ENCODE measurements at regions of chr22 and their contacts with region 1.

Region 1: DNA sequence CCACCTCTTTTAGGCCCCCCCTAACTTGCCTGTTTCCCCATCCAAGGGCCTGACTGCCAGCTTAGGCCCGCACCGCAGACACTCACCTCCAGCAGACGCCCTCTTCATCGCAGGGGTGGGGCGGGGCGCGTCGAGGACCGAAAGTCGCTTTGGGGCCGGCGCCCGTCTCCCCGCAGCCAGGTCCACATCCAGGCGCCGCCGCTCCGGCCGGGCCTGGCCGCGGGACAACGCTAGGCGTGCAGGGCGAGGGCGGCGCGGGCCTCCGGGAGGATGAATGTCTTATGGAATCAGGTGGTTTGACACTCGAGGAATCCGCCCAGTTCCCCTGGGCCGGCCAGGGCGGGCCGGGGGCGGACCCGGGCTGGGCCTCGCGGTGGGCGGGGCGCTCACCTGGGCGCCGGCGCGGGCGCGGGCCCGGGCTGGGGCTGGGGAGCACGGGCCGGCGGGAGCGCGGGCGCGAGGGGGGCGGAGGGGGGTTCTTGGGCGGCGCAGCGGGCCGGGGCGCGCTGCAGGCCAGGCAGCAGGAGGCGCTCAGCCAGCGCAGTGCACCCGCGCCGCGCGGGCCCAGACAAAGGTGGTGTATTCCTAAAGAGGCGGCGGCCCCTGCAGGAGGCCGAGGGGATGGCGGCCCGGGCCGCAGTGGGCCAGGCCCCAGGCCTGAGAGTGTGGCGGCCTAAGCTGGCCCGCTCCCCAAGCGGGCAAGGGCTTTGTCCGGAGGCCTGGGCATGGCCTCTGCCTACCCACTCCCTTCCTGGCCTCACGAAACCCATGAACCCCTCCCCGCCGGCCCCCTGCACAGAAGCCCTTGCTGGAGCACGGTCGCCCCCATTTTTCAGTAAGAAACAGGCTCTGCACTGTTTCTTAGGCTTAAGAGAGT is 177.6 kb downstream of the IGLL1 start:
- DNase-seq: peak; percentile 25 to 82 (median 64)

Region 2: GRCh38 chr22:22960307-22960706 is 442.2 kb before region 1 on chr22:
- intact Hi-C with region 1: no loop called
- DNase-seq: no peak

Region 3: DNA sequence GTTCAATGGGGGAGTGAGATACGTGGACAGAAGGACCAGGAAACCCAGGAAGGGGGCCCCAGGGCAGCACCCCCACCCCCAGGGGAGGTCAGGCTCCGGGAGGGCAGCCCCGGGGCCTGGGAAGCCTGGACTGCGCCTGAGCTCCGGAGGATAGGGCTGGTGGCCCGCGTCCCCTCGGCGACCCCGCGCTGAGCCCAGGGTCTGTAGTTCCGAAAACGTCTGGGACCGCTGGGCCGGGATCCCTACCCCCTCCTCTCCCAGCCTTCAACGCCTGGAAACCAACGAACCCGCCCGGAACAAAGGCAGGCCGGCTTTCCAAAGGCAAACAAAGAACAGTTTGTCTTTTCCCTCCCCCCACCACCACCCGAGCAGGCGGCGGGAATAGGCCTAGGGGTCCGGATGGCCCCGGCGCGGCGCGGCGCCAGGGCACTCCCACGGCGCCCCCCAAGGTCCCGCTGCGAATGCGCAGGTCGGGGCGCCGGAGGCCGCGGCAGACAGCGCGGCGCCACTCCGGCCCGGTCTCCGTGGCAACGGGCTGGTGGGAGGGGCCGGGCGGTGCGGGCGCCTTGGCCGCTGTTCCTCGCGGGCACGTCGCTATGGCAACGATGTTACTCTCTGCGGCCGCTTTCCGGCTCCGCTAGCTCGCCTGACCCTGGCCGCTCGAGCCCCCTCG is 119.1 kb after region 1 on chr22:
- intact Hi-C with region 1: loop called (anchors 10 kb)
- DNase-seq: peak; percentile 85 to 98 (median 94)

Region 4: GRCh38 chr22:23632178-23632577 is 229.7 kb after region 1 on chr22 and contains the start of gene DRICH1:
- intact Hi-C with region 1: no loop called
- DNase-seq: no peak

Measured in head of caudate nucleus (tissue), 42 donors.